A549 (cell line): ENCODE measurements at regions of chr11 and their contacts with region 1.

Region 1: DNA sequence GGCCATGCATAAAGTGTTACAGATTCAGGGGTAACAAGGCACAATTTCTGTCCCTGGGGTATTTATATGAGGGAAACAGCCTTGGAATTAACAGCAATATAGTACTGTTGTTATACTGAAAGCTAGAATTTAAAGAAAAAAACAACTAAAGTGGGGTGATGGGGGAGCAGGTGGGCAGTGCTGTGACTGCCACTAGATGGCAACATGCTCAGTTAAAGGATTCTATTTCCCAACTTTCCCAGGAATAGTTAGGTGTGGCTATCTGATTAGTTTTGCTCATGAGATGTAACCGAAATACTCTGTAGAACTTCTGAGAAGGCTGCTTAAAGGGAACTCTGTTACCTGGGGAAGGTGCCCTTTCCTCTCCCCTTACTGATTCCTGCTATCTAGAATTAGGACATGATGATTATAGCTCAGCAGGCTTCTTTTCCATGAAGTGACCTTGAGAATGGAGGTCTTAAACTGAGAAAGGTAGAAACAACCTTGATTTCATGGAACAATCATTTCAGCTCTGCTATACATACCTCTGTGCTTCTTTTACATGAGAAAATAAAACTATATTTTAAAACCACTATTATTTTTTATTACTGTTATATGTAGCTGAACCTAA is 102.6 kb downstream of the RELT start:
- DNase-seq: peak; percentile 51 to 61
- ATAC-seq: peak; percentile 85 to 93
- H3K4me3 ChIP-seq: no peak overlapping the region
- H3K27ac ChIP-seq: no peak overlapping the region
- H3K4me1 ChIP-seq: no peaks in the 10 kb centered on the region; the same call in 2 of the 3 replicates
- CTCF ChIP-seq: peak; percentile 89
- EP300 ChIP-seq: no peak
- POLR2A ChIP-seq: no peak
- RAD21 ChIP-seq: peak; percentile 61 to 68

Region 2: DNA sequence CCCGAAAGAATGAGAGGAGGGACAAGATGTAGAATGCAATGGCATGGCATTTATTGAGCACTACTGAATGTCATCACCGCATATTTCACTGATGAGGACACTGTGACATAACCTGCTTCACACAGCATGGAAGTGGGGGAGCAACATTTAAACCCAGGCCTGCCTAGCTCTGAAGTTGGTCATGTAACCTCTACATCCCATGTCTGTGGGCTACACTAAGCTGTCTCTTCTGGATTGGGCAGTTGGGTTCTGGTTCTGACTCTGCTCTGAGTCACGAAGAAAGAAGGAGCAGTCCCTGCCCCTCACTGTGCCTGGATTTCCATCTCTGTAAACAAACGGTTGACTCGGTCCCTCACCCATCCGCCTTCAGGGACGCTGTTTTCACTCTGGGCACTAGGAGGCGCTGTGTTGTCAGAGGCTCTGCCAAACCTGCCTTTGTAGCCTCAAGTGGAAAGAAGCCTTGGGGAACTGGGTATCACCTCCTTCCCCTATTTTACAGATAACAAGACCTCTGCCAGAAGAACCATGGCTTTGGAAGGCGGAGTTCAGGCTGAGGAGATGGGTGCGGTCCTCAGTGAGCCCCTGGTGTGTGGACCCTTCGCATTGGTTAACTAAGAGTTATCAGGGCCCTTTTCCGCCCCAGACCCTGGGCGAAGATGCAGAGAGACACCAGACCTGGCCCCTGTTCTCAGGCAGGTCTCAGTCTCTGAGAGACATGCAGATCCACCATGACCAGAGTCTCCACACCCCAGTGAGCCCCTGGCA is 183.4 kb before region 1 on chr11:
- CTCF ChIA-PET with region 1: no interaction called
- POLR2A ChIA-PET with region 1: no interaction called
- DNase-seq: peak; percentile 70 to 73
- ATAC-seq: peak; percentile 65 to 84
- H3K4me3 ChIP-seq: no peak overlapping the region
- H3K27ac ChIP-seq: peak overlapping the region in 1 of 2 experiments; percentile 47; a peak in 1 of 6 replicates
- H3K4me1 ChIP-seq: peaks cover 8% of the 10 kb centered on the region
- CTCF ChIP-seq: peak; percentile 86
- EP300 ChIP-seq: no peak
- POLR2A ChIP-seq: no peak
- RAD21 ChIP-seq: peak in 1 of 2 experiments; percentile 60; a peak in 4 of 5 replicates

Region 3: GRCh38 chr11:73453562-73453961 is 25.3 kb before region 1 on chr11:
- CTCF ChIA-PET with region 1: interaction called, 10 read pairs
- POLR2A ChIA-PET with region 1: no interaction called
- DNase-seq: no peak
- ATAC-seq: no peak
- H3K4me3 ChIP-seq: no peak overlapping the region
- H3K27ac ChIP-seq: no peak overlapping the region
- H3K4me1 ChIP-seq: no peaks in the 10 kb centered on the region
- CTCF ChIP-seq: no peak
- EP300 ChIP-seq: no peak
- POLR2A ChIP-seq: no peak
- RAD21 ChIP-seq: no peak

Region 4: DNA sequence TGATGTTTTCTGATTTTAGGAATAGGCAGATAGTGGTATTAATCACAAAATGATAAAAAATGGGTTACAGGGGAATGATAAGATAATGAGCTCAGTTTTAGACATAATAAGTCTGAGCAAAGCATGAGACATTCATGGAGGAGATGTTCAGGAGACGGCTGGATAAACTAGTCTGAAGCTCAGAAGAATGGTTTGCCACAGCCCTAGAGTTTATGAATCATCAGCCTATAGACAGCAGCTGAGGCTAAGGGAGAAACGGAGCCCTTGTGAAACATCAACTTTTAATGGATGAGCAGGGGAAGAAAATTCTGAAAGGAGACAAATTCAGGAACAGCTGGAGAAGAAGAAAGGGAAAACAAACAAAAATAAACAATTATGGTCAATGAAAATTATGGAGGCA is 15.5 kb before region 1 on chr11:
- CTCF ChIA-PET with region 1: interaction called, 43 read pairs
- POLR2A ChIA-PET with region 1: no interaction called
- DNase-seq: peak in 1 of 2 experiments; percentile 9
- ATAC-seq: 0 out of 6 replicates have a peak, but pooled peaks of 1 of the 2 experiments have one; percentile 40
- H3K4me3 ChIP-seq: no peak overlapping the region
- H3K27ac ChIP-seq: no peak overlapping the region
- H3K4me1 ChIP-seq: no peaks in the 10 kb centered on the region
- CTCF ChIP-seq: no peak
- EP300 ChIP-seq: no peak
- POLR2A ChIP-seq: no peak
- RAD21 ChIP-seq: no peak

Region 5: GRCh38 chr11:73493956-73494598 is 15.2 kb after region 1 on chr11:
- CTCF ChIA-PET with region 1: interaction called, 28 read pairs
- POLR2A ChIA-PET with region 1: no interaction called
- DNase-seq: peak in 1 of 2 experiments; percentile 38
- ATAC-seq: peak in 1 of 2 experiments; percentile 71; a peak in 3 of 6 replicates
- H3K4me3 ChIP-seq: no peak overlapping the region
- H3K27ac ChIP-seq: no peak overlapping the region
- H3K4me1 ChIP-seq: 0 out of 3 replicates have a peak, but pooled peaks cover 11% of the 10 kb centered on the region
- CTCF ChIP-seq: no peak
- EP300 ChIP-seq: no peak
- POLR2A ChIP-seq: no peak
- RAD21 ChIP-seq: no peak

Region 6: GRCh38 chr11:73510877-73511276 is 32.0 kb after region 1 on chr11:
- CTCF ChIA-PET with region 1: interaction called, 19 read pairs
- POLR2A ChIA-PET with region 1: no interaction called
- DNase-seq: no peak
- ATAC-seq: no peak
- H3K4me3 ChIP-seq: no peak overlapping the region
- H3K27ac ChIP-seq: no peak overlapping the region
- H3K4me1 ChIP-seq: peaks cover 6% of the 10 kb centered on the region; the same call in 1 of the 3 replicates
- CTCF ChIP-seq: no peak
- EP300 ChIP-seq: no peak
- POLR2A ChIP-seq: no peak
- RAD21 ChIP-seq: no peak